IMR-90 (cell line): ENCODE measurements at regions of chr1 and their contacts with region 1.

Region 1: GRCh38 chr1:231364192-231364591 is 26.1 kb downstream of the SPRTN start:
- DNase-seq: no peak
- ATAC-seq: no peak
- H3K4me3 ChIP-seq: no peak overlapping the region
- H3K27ac ChIP-seq: no peak overlapping the region
- H3K4me1 ChIP-seq: no peaks in the 10 kb centered on the region
- H3K27me3 ChIP-seq: no peaks in the 10 kb centered on the region
- CTCF ChIP-seq: no peak
- POLR2A ChIP-seq: no peak
- RAD21 ChIP-seq: no peak

Region 2: DNA sequence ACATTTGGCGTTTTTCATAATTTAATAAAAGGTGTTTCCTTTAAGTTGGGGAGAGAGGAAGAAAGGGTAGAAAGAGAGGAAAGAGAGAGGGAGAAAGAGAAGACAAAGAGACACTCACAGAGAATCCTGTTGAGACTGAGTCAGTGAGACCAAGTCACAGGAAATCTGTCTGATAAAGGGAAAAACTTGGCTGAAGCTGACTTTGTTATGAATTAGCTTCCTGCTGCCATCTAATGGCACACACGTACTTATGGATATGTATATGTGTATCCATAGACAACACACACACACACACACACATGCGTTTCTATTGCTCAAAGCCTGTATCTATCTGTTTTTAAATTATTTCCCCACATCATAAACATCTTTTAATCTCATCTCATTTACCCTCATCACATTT is 219.9 kb after region 1 on chr1:
- CTCF ChIA-PET with region 1: no interaction called
- POLR2A ChIA-PET with region 1: no interaction called
- dilution Hi-C with region 1: no loop called
- in situ Hi-C with region 1: loop called (anchors 5 kb)
- intact Hi-C with region 1: no loop called
- DNase-seq: peak; percentile 82
- ATAC-seq: peak; percentile 88
- H3K4me3 ChIP-seq: no peak overlapping the region
- H3K27ac ChIP-seq: no peak overlapping the region
- H3K4me1 ChIP-seq: no peaks in the 10 kb centered on the region
- H3K27me3 ChIP-seq: no peaks in the 10 kb centered on the region
- CTCF ChIP-seq: peak; percentile 42
- POLR2A ChIP-seq: no peak
- RAD21 ChIP-seq: peak; percentile 55